ENCODE measurements at regions of chr15 and their contacts with region 1.

Region 1: GRCh38 chr15:40274350-40275274 is 8.3 kb downstream of the ANKRD63 start:
- DNase-seq: peak in 1 of 2 donors; percentile 87
- ATAC-seq: peak; percentile 56

Region 2: DNA sequence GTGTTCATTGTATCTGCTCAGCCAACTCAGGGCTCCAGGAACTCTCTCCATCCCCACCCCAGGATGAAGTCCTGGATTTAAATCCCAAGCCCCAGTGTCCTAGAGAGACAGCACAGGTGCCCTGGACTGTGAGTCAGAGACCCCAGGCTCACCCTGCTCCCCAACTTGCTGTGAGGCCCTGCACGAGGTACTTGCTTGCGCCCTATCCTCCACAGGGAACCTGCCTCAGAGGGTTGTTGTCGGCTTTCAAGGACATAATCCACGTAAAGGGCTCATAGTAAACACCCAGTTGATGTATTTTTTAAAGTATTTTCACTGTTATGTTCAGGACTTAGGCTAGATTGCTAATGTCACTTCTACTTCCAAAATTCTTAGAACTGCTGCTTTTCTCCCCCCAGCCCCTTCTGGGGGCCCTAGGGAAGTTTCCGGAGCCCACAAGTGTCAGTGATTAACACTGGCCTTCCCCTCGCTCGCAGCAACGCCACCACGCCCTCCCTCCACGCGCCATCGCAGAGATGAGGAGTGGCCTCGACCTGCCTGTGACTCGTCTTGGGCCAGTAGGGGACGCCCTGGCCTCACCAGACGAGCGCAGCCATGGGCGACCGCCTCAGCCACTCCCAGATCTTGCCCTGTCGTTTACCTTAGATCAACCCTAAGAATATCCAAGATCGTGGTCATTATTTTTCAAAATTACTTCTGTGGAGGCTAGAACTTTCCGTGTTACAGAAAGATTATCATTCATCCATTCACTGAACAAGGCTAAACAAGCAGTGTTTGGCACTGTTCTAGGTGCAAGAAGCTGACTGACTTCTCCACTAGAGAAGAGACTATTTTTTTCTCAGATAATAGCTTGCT is 229.7 kb before region 1 on chr15:
- intact Hi-C with region 1: loop called in 1 of 2 experiments (anchors 5 kb)
- DNase-seq: peak; percentile 89 to 95
- ATAC-seq: peak; percentile 85

Region 3: GRCh38 chr15:40217159-40217824 is 57.3 kb before region 1 on chr15:
- intact Hi-C with region 1: loop called in 1 of 2 experiments (anchors 5 kb)
- DNase-seq: peak; percentile 13 to 45
- ATAC-seq: peak; percentile 96

Region 4: DNA sequence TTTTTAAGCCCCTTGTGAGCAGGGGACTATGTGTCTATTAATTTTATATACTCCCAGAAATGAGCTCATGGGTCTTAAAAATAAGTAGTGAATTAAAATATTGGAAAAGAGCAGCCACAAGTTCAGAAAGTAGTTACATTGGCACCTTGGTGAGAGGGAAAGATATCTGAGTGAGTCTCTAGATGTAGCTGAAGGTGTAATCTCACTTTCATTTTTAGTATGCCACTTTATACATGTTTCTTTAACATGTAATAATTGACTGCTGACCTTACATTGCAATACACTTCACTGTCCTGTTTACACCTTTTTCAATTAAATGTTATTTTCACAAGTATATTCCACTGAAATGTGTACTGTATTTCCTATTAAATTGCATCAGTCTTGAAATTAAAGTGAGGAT is 47.9 kb before region 1 on chr15:
- intact Hi-C with region 1: loop called in 1 of 2 experiments (anchors 5 kb)
- DNase-seq: no peak
- ATAC-seq: no peak

Region 5: DNA sequence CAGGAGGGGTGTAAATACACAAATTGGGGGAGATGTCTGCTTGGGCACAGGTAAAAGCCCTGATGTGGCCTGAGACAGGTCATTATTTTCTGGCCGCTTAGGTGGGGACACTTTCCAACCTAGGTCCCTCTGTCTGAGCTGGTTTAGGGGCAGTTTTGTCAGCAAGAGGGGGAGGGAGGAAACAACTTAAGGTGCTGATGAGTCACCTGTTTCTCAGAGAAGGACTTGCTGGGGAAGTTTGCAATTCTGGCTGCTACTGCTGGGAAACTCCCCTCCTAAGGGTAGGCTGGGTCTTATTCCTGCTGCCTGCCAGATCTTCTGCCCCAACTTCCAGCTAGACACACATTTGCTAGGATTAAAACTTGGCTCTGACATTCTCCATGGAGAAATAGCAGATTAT is 604.2 kb after region 1 on chr15:
- intact Hi-C with region 1: no loop called
- DNase-seq: no peak
- ATAC-seq: peak; percentile 44